HepG2 (cell line): ENCODE measurements at regions of chr22 and their contacts with region 1.

Region 1: GRCh38 chr22:38733329-38733723 is 22.5 kb downstream of the SUN2 start:
- DNase-seq: peak; percentile 16
- ATAC-seq: peak; percentile 68
- H3K4me3 ChIP-seq: no peak overlapping the region
- H3K27ac ChIP-seq: no peak overlapping the region
- H3K4me1 ChIP-seq: peaks cover 22% of the 10 kb centered on the region
- H3K27me3 ChIP-seq: no peaks in the 10 kb centered on the region; a peak in 1 of 5 replicates
- CTCF ChIP-seq: peak; percentile 82
- EP300 ChIP-seq: no peak
- POLR2A ChIP-seq: peak in 1 of 2 experiments; percentile 24; a peak in 1 of 4 replicates
- RAD21 ChIP-seq: peak; percentile 47

Region 2: GRCh38 chr22:38645430-38645829 is 87.9 kb before region 1 on chr22:
- CTCF ChIA-PET with region 1: no interaction called
- POLR2A ChIA-PET with region 1: no interaction called
- in situ Hi-C with region 1: no loop called
- intact Hi-C with region 1: no loop called
- DNase-seq: no peak
- ATAC-seq: no peak
- H3K4me3 ChIP-seq: no peak overlapping the region
- H3K27ac ChIP-seq: no peak overlapping the region
- H3K4me1 ChIP-seq: no peaks in the 10 kb centered on the region
- H3K27me3 ChIP-seq: no peaks in the 10 kb centered on the region; a peak in 1 of 5 replicates
- CTCF ChIP-seq: no peak
- EP300 ChIP-seq: no peak
- POLR2A ChIP-seq: no peak
- RAD21 ChIP-seq: no peak

Region 3: GRCh38 chr22:38681784-38682335 is 51.5 kb before region 1 on chr22 and contains the start of gene TOMM22:
- CTCF ChIA-PET with region 1: no interaction called
- POLR2A ChIA-PET with region 1: no interaction called
- in situ Hi-C with region 1: no loop called
- intact Hi-C with region 1: no loop called
- DNase-seq: peak; percentile 75
- ATAC-seq: peak; percentile 99
- H3K4me3 ChIP-seq: peak within 1 kb of the TSS; percentile 98 to 99 (median 99)
- H3K27ac ChIP-seq: peak within 1 kb of the TSS; percentile 76
- H3K4me1 ChIP-seq: peaks cover 30% of the 10 kb centered on the region
- H3K27me3 ChIP-seq: no peaks in the 10 kb centered on the region
- CTCF ChIP-seq: peak; percentile 97
- EP300 ChIP-seq: no peak; a peak in 1 of 4 replicates
- POLR2A ChIP-seq: peak; percentile 86 to 93
- RAD21 ChIP-seq: peak; percentile 67
- total RNA-seq, gene TOMM22: 118 and 143 TPM in 2 replicates

Region 4: GRCh38 chr22:38744981-38745380 is 11.7 kb after region 1 on chr22:
- CTCF ChIA-PET with region 1: no interaction called
- POLR2A ChIA-PET with region 1: interaction called, 22 read pairs
- in situ Hi-C with region 1: no loop called
- intact Hi-C with region 1: no loop called
- DNase-seq: no peak
- ATAC-seq: peak; percentile 11; the same call in 2 of the 3 replicates
- H3K4me3 ChIP-seq: no peak overlapping the region
- H3K27ac ChIP-seq: peak overlapping the region; percentile 56
- H3K4me1 ChIP-seq: peaks cover 47% of the 10 kb centered on the region
- H3K27me3 ChIP-seq: no peaks in the 10 kb centered on the region
- CTCF ChIP-seq: no peak
- EP300 ChIP-seq: no peak
- POLR2A ChIP-seq: no peak
- RAD21 ChIP-seq: no peak

Region 5: DNA sequence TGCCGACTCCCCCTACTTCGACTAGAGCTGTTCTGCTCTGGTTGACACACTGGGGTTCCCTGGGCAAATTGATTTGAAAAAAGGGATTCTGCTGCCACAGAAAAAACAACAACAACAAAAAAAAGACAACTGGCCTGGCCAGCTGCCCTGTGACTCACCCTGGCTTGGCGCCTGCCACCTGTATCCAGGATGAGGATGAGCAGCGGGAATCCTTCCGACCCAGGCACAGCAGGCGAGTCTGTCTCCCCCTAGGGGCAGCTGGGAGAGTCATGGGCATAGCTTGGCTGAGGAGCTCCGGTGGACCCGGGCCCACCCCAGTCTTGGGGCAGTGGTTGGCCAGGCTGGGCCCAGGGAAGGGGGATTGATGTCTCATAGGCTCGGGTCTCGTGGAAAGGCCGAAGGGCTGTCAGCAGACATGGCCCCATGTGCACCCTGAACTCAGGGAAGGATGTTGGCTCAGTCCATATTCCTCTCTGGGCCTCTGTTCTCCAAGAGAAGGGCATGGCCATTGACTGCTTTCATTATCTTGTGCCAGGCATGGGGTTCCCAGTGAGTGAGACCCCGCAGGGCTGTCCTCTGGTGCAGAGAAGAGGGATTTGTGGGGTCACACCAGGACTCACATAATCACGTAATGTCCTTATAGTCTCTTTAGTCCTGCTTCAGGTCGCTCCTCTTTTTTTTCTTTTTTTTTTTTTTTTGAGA is 32.9 kb after region 1 on chr22:
- CTCF ChIA-PET with region 1: interaction called, 9 read pairs
- POLR2A ChIA-PET with region 1: interaction called, 8 read pairs
- in situ Hi-C with region 1: no loop called
- intact Hi-C with region 1: loop called (anchors 1 kb)
- DNase-seq: peak; percentile 74
- ATAC-seq: peak; percentile 89
- H3K4me3 ChIP-seq: no peak overlapping the region
- H3K27ac ChIP-seq: no peak overlapping the region
- H3K4me1 ChIP-seq: peaks cover 40% of the 10 kb centered on the region
- H3K27me3 ChIP-seq: peaks cover 2 to 33% of the 10 kb centered on the region in 2 experiments; a peak in 4 of 5 replicates
- CTCF ChIP-seq: peak; percentile 93
- EP300 ChIP-seq: no peak
- POLR2A ChIP-seq: no peak
- RAD21 ChIP-seq: peak; percentile 73